ENCODE measurements at regions of chr4 and their contacts with region 1.

Region 1: GRCh38 chr4:151760712-151761527 is at the start of gene GATB:
- DNase-seq: peak; percentile 95
- H3K4me3 Mint-ChIP-seq: peak within 1 kb of the TSS; percentile 99
- H3K27ac Mint-ChIP-seq: peak within 1 kb of the TSS; percentile 89
- H3K4me1 Mint-ChIP-seq: peaks cover 13% of the 10 kb centered on the region
- H3K27me3 Mint-ChIP-seq: no peaks in the 10 kb centered on the region
- total RNA-seq, gene GATB: 15.2 to 22.1 TPM

Region 2: DNA sequence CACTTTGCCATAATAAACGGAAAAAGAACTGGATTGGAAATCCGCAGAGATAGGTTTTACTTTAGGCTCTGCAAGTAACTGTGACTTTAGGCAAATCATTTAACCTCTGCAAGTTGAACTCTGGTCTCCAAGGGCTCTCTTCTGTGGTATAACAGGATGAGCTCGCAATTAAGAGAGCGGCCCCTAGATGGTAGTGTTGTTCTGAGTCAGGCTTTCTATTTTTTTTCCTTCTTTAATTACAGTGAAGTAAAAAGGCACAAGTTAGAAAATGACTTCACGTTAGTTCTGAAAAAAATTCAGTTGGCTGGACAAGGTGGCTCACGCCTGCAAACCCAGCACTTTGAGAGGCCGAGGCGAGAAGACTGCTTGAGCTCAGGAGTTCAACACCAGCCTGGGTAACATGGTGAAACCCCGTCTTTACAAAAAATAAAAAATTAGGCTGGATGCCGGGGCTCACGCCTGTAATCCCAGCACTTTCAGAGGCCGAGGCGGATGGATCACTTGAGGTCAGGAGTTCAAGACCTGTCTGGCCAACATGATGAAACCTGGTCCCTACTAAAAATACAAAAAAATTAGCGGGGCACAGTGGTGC is 643.5 kb before region 1 on chr4:
- CTCF ChIA-PET with region 1: no interaction called
- intact Hi-C with region 1: loop called (anchors 5 kb)
- DNase-seq: peak; percentile 77
- H3K4me3 Mint-ChIP-seq: no peak overlapping the region
- H3K27ac Mint-ChIP-seq: no peak overlapping the region
- H3K4me1 Mint-ChIP-seq: peaks cover 3% of the 10 kb centered on the region
- H3K27me3 Mint-ChIP-seq: no peaks in the 10 kb centered on the region

Region 3: DNA sequence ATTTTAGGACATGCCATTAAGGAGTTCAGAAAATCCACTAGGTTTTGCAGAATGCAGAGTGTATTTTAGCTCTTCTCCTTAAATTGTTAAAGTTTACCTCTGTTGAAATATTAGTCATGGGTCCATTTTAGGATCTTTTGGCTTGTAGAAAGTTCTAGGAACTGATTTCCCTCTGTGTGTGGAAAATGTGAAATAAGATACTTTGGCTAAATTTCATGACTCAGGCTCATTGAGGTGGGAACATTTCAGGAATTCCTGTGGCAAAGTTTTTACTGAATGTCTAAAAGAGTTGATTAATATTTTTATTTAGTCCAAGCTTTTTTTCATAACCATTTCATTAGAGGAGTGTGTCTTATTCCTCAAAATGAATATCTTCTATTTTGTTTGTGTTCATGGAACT is 344.9 kb before region 1 on chr4:
- CTCF ChIA-PET with region 1: no interaction called
- intact Hi-C with region 1: no loop called
- DNase-seq: no peak
- H3K4me3 Mint-ChIP-seq: no peak overlapping the region
- H3K27ac Mint-ChIP-seq: no peak overlapping the region
- H3K4me1 Mint-ChIP-seq: no peaks in the 10 kb centered on the region
- H3K27me3 Mint-ChIP-seq: no peaks in the 10 kb centered on the region

Region 4: DNA sequence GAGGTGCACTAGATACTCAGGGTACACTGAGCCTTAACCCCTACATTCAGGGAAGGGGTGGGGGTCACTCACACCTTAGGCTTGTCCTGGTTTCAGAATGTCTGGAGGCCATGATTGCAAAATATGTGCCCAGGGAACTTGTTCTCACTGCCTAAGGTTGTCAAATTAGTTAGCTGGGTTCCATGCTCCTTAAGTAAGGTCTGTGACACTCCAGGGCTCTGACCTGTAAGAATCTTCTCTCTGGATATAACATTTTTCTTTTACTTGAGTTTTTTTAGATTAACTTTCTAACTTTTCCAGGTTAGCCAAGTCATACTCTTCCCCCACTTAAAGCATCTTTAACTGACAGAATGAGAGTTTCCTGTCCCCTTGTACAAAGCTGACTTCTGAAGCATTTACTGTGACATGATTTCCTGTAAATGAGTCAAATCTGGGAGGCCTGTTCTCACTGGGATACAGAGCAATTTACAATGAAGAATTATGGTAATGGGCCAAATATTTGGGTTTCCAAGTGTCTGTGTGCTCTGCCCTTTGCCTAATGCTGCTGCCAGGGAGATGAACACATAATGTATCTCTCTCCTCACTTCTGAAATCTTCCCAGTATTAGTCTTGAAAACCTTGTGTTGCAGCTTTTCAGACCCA is 101.8 kb before region 1 on chr4:
- CTCF ChIA-PET with region 1: no interaction called
- intact Hi-C with region 1: loop called (anchors 5 kb)
- DNase-seq: no peak
- H3K4me3 Mint-ChIP-seq: no peak overlapping the region
- H3K27ac Mint-ChIP-seq: peak overlapping the region; percentile 81
- H3K4me1 Mint-ChIP-seq: peaks cover 18% of the 10 kb centered on the region
- H3K27me3 Mint-ChIP-seq: no peaks in the 10 kb centered on the region

Region 5: GRCh38 chr4:151887031-151887815 is 126.3 kb after region 1 on chr4:
- CTCF ChIA-PET with region 1: no interaction called
- intact Hi-C with region 1: loop called (anchors 1 kb)
- DNase-seq: peak; percentile 14
- H3K4me3 Mint-ChIP-seq: no peak overlapping the region
- H3K27ac Mint-ChIP-seq: peak overlapping the region; percentile 28
- H3K4me1 Mint-ChIP-seq: peaks cover 21% of the 10 kb centered on the region
- H3K27me3 Mint-ChIP-seq: no peaks in the 10 kb centered on the region

Region 6: GRCh38 chr4:151912632-151913031 is 151.7 kb after region 1 on chr4:
- CTCF ChIA-PET with region 1: no interaction called
- intact Hi-C with region 1: no loop called
- DNase-seq: no peak
- H3K4me3 Mint-ChIP-seq: no peak overlapping the region
- H3K27ac Mint-ChIP-seq: no peak overlapping the region
- H3K4me1 Mint-ChIP-seq: no peaks in the 10 kb centered on the region
- H3K27me3 Mint-ChIP-seq: no peaks in the 10 kb centered on the region

Region 7: DNA sequence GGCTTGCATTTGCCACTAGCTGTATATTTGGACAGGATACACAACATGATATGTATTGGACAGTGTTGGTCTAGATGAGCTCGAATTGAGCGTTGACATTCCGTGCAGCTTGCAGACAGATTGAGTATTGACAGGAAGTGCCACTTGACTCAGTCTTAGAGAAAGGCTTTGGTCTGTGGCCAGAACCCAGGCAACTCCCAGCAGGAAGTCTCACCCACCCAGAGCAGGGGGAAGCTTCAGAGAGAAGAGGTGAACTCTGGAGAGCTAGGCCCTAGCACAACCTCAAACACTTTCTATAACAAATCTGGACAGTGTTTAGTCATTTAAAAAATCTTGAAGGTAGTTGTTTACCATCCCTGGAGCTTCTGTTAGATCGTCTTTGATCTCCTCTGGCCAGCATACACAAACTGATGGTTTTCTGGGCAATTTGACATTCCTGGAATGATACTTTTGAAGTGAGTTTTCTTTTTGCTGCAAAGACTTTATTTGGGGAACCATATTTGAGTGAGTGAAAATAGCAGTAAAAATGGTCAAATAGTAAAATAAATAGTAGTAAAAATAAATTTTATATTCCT is 494.6 kb after region 1 on chr4:
- CTCF ChIA-PET with region 1: no interaction called
- intact Hi-C with region 1: loop called (anchors 2 kb)
- DNase-seq: peak; percentile 81
- H3K4me3 Mint-ChIP-seq: no peak overlapping the region
- H3K27ac Mint-ChIP-seq: no peak overlapping the region
- H3K4me1 Mint-ChIP-seq: peaks cover 17% of the 10 kb centered on the region
- H3K27me3 Mint-ChIP-seq: no peaks in the 10 kb centered on the region